ENCODE measurements at regions of chr4 and their contacts with region 1.

Region 1: DNA sequence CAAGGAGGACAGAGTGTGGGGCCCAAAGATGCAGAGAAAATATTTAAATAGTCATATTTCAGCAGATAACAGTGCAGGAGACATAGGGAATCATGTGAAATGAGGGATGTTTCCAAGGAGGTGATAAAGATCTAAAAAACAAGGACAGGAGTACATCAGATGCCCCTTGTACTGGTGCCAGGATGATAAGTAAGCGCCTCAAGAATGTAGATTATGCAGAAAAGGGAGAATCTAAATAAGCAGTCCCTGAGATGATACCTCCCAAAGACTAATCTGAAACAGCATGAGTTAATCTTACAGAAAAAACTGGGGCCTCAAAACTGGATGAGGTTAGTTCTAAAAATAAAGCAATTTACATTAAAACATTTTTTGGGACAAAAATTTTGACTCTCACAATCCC is 136.1 kb upstream of the WDFY3 start:
- DNase-seq: no peak
- H3K4me3 ChIP-seq: no peak overlapping the region
- H3K27ac ChIP-seq: no peak overlapping the region
- H3K4me1 ChIP-seq: no peaks in the 10 kb centered on the region
- H3K27me3 ChIP-seq: no peaks in the 10 kb centered on the region
- CTCF ChIP-seq: no peak

Region 2: DNA sequence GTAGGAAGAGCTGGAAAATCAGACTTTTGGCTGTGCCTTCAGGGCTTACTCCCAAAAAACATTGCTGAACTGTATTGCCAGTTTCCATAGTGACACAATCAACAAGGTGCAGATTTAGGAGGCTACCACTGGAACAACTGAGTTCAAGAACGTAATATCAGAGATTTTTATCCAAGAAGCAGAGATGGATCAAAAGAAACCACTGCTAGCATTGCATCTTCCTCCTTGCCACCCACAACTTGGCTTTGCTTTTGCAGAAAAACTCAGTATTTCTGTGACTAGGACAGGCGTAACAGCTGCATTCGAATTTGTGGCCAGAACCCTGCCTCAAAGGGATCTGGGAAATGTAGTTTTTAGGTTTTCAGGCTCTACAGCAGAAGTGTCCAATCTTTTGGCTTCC is 108.3 kb before region 1 on chr4:
- intact Hi-C with region 1: no loop called
- DNase-seq: no peak
- H3K4me3 ChIP-seq: no peak overlapping the region
- H3K27ac ChIP-seq: no peak overlapping the region
- H3K4me1 ChIP-seq: no peaks in the 10 kb centered on the region
- H3K27me3 ChIP-seq: no peaks in the 10 kb centered on the region
- CTCF ChIP-seq: no peak

Region 3: GRCh38 chr4:85113706-85114105 is 11.1 kb after region 1 on chr4:
- intact Hi-C with region 1: loop called (anchors 2 kb)
- DNase-seq: no peak
- H3K4me3 ChIP-seq: no peak overlapping the region
- H3K27ac ChIP-seq: no peak overlapping the region
- H3K4me1 ChIP-seq: no peaks in the 10 kb centered on the region
- H3K27me3 ChIP-seq: no peaks in the 10 kb centered on the region
- CTCF ChIP-seq: no peak